Gastrocnemius medialis (tissue), 4 donors: ENCODE measurements at regions of chr6 and their contacts with region 1.

Region 1: GRCh38 chr6:43174263-43175112 is 3.4 kb downstream of the SRF start:
- DNase-seq: peak; percentile 99
- ATAC-seq: peak; percentile 77 to 79
- H3K4me3 ChIP-seq: peak overlapping the region; percentile 51 to 88 (median 65)
- H3K27ac ChIP-seq: peak overlapping the region; percentile 89 to 98 (median 92)
- H3K4me1 ChIP-seq: peaks cover 30 to 41% of the 10 kb centered on the region in 2 donors
- H3K27me3 ChIP-seq: no peaks in the 10 kb centered on the region
- CTCF ChIP-seq: peak in 3 of 5 experiments; percentile 28 to 48 (median 36)
- POLR2A ChIP-seq: peak; percentile 64 to 82

Region 2: GRCh38 chr6:42745707-42746462 is 428.6 kb before region 1 on chr6 and contains the start of gene TBCC:
- in situ Hi-C with region 1: no loop called
- intact Hi-C with region 1: loop called (anchors 2 kb)
- DNase-seq: peak; percentile 99
- ATAC-seq: peak; percentile 84 to 86
- H3K4me3 ChIP-seq: peak within 1 kb of the TSS; percentile 80 to 99 (median 92)
- H3K27ac ChIP-seq: peak within 1 kb of the TSS; percentile 95 to 100 (median 97)
- H3K4me1 ChIP-seq: peaks cover 26 to 29% of the 10 kb centered on the region in 2 donors
- H3K27me3 ChIP-seq: no peaks in the 10 kb centered on the region
- CTCF ChIP-seq: no peak
- POLR2A ChIP-seq: peak; percentile 91 to 97
- total RNA-seq, gene TBCC: 33.2 to 61.8 (median 45.1) TPM

Region 3: DNA sequence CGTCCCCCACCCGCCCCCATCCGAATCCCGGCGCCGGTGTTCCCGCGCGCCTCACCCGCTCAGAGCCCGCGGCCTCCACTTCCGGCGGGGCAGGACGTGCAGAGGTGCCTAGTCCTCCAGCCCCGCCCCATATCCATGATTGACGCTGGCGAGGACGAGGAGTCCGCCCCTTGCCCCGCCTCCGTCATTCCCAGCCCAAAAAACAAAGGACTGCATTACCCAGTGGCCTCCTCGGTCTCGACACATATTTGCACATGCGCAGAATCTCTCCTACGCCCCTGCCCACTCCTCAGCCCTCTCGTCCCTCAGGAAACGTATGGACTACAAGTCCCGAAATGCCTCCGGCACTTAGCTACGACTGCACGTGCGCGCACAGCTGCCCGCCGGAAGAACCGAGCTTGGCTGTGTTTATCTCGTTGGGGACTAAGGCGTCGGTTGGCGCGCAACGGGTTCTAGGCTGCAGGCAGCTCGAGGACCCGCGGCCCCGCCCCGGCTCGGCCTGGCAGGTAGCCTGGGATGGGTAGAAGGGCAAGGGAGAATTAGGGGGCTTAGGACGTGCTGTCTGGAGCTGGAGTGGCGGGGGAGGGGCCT is 160.6 kb before region 1 on chr6 and contains the starts of genes KLHDC3 and MEA1:
- in situ Hi-C with region 1: no loop called
- intact Hi-C with region 1: loop called (anchors 2 kb)
- DNase-seq: peak; percentile 100
- ATAC-seq: peak; percentile 94 to 97
- H3K4me3 ChIP-seq: peak within 1 kb of the TSS; percentile 77 to 90 (median 82)
- H3K27ac ChIP-seq: peak within 1 kb of the TSS; percentile 95 to 98 (median 98)
- H3K4me1 ChIP-seq: peaks cover 54 to 59% of the 10 kb centered on the region in 2 donors
- H3K27me3 ChIP-seq: no peaks in the 10 kb centered on the region
- CTCF ChIP-seq: no peak
- POLR2A ChIP-seq: peak; percentile 66
- total RNA-seq, gene KLHDC3: 66.5 to 164 (median 119) TPM
- total RNA-seq, gene MEA1: 25.0 to 33.5 (median 25.9) TPM

Region 4: DNA sequence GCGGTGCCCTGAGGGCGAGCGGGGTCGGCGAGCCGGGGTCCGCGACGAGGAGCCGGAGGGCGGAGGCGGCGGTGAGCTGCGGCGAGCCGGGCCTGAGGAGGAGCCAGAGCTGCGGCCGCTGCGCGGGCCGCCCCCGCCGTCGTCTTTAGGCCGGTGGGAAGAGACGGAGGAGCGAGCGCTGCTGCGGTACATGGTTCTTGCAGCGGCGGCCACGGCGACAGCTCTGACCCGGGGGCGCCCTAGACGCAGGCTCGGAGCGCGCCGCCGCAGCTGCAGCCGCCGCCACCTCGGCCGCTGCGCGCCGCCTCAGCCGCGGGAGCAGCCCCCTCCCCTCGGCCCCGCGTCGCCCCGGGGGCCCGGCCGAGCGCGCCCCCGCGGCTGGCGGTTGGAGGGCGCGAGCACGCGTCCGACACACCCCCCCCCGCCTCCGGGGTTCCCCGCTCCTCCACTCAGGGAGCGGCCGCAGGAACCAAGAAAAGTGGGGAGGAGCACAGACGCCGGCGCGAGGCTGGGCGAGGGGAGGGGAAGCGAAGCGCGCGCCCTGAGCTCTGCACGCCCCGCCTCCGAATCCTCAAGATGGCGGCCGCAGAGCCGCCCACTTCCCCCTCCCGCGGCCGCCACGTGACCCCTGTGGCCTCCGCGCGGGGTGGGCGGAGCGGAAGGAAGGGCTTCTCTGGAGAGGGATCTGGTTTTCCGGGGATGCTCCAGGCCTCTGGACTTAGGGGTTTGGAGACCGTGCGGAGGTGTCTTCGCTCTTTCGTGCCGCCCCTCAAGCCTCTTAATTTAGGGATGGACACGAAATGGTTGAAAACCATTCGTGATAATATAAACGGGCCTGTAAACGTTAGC is 194.9 kb after region 1 on chr6 and contains the start of gene ZNF318:
- in situ Hi-C with region 1: no loop called
- intact Hi-C with region 1: loop called (anchors 5 kb)
- DNase-seq: peak; percentile 92 to 95
- ATAC-seq: peak; percentile 92 to 94
- H3K4me3 ChIP-seq: peak within 1 kb of the TSS; percentile 75 to 98 (median 86)
- H3K27ac ChIP-seq: peak within 1 kb of the TSS; percentile 85 to 88 (median 86)
- H3K4me1 ChIP-seq: peaks cover 11 to 17% of the 10 kb centered on the region in 2 donors
- H3K27me3 ChIP-seq: no peaks in the 10 kb centered on the region
- CTCF ChIP-seq: no peak
- POLR2A ChIP-seq: peak; percentile 34 to 56
- total RNA-seq, gene ZNF318: 9.9 to 13.8 (median 12.4) TPM

Region 5: DNA sequence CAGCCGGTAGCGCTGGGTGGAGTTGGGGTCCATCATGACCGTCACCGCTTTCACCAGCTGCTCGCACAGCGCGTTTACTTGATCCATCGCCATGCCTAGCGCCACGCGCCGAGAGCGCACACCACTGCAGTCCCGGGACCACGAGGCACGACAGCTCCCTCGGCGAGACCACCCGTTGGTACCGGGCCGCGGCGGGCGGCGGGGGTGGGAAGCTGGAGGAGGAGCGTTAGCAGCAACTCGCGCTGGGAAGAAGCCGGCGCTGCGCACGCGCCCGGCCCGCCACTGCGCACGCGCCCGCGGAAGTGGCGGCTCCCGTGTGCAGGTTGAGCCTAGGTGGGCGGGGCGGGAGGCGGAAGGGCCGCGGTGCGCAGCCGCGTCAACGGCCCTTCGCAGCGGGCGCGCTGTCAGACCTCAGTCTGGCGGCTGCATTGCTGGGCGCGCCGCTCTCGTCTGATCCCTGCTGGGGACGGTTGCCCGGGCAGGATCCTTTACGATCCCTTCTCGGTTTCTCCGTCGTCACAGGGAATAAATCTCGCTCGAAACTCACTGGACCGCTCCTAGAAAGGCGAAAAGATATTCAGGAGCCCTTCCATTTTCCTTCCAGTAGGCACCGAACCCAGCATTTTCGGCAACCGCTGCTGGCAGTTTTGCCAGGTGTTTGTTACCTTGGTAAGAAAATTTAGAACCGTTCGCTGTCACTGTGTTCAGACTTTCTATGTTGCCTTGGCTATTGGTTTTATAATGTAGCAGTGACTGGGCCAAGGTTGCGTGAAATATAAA is 401.5 kb after region 1 on chr6 and contains the starts of genes POLH and XPO5:
- in situ Hi-C with region 1: no loop called
- intact Hi-C with region 1: loop called (anchors 5 kb)
- DNase-seq: peak; percentile 85 to 92
- ATAC-seq: peak; percentile 90 to 92
- H3K4me3 ChIP-seq: peak within 1 kb of the TSS; percentile 77 to 94 (median 83)
- H3K27ac ChIP-seq: peak within 1 kb of the TSS; percentile 84 to 94 (median 89)
- H3K4me1 ChIP-seq: peaks cover 26 to 37% of the 10 kb centered on the region in 2 donors
- H3K27me3 ChIP-seq: no peaks in the 10 kb centered on the region
- CTCF ChIP-seq: no peak
- POLR2A ChIP-seq: peak; percentile 98
- total RNA-seq, gene POLH: 3.8 to 6.9 (median 5.3) TPM
- total RNA-seq, gene XPO5: 11.8 to 21.8 (median 16.6) TPM